Esophagus muscularis mucosa (tissue), 4 donors: ENCODE measurements at regions of chr4 and their contacts with region 1.

Region 1: DNA sequence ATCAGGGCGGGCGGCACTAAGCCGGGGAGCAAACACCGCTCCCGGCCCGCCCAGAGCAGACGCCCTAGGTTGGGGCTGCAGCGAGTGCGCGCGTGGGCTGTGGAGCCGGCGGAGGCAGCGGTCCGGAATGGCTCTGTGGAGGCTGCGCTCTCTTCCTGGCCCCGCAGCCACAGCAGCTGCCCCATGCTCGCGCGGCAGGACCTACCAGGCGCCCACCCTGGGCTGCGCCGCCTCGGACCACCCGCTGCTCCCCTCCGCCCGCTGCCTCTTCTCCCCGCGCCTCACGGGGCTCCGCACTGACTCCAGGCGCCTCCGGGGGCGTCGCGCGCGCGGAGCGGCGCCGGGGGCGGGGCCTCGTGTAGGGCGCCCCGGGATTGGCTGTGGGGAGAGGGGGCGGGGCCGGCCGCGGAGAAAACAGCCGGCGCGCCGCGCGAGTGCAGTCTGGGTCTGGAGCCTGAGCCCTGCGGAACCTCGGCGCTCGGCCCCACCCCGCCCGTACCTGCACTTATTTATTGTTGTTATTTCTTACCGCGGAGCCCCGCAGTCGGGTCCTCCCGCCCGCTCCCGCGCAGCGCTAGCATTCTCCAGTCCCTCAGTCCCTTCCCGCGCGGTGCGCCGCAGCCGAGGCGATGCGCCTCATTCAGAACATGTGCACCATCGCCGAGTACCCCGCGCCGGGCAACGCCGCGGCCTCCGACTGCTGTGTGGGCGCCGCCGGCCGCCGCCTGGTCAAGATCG is at the start of gene RASL11B:
- DNase-seq: no peak
- H3K4me3 ChIP-seq: peak within 1 kb of the TSS; percentile 70 to 89 (median 71)
- H3K27ac ChIP-seq: peak within 1 kb of the TSS; percentile 29 to 57 (median 50)
- H3K4me1 ChIP-seq: peaks cover 15 to 33% (median 30%) of the 10 kb centered on the region in 4 donors
- H3K27me3 ChIP-seq: peaks cover 0 to 26% (median 8%) of the 10 kb centered on the region in 4 donors
- CTCF ChIP-seq: peak in 2 of 3 experiments; percentile 25 to 60
- EP300 ChIP-seq: no peak
- POLR2A ChIP-seq: no peak
- total RNA-seq, gene RASL11B: 0.83 to 2.3 (median 1.3) TPM

Region 2: GRCh38 chr4:52721968-52722815 is 139.9 kb before region 1 on chr4:
- intact Hi-C with region 1: loop called (anchors 5 kb)
- DNase-seq: peak; percentile 99
- H3K4me3 ChIP-seq: peak overlapping the region; percentile 78 to 95 (median 91)
- H3K27ac ChIP-seq: peak overlapping the region; percentile 88 to 92 (median 90)
- H3K4me1 ChIP-seq: peaks cover 0 to 18% (median 12%) of the 10 kb centered on the region in 4 donors
- H3K27me3 ChIP-seq: no peaks in the 10 kb centered on the region
- CTCF ChIP-seq: peak in 1 of 3 experiments; percentile 10
- EP300 ChIP-seq: no peak
- POLR2A ChIP-seq: no peak

Region 3: GRCh38 chr4:52824603-52825459 is 37.2 kb before region 1 on chr4:
- intact Hi-C with region 1: loop called (anchors 5 kb)
- DNase-seq: peak; percentile 91
- H3K4me3 ChIP-seq: no peak overlapping the region
- H3K27ac ChIP-seq: peak overlapping the region; percentile 38 to 67 (median 46)
- H3K4me1 ChIP-seq: peaks cover 14 to 35% (median 33%) of the 10 kb centered on the region in 4 donors
- H3K27me3 ChIP-seq: no peaks in the 10 kb centered on the region
- CTCF ChIP-seq: no peak
- EP300 ChIP-seq: no peak
- POLR2A ChIP-seq: no peak

Region 4: GRCh38 chr4:52939739-52940138 is 77.7 kb after region 1 on chr4:
- intact Hi-C with region 1: no loop called
- DNase-seq: no peak
- H3K4me3 ChIP-seq: no peak overlapping the region
- H3K27ac ChIP-seq: no peak overlapping the region
- H3K4me1 ChIP-seq: no peaks in the 10 kb centered on the region
- H3K27me3 ChIP-seq: no peaks in the 10 kb centered on the region
- CTCF ChIP-seq: no peak
- EP300 ChIP-seq: no peak
- POLR2A ChIP-seq: no peak